ENCODE measurements at regions of chr6 and their contacts with region 1.

Region 1: DNA sequence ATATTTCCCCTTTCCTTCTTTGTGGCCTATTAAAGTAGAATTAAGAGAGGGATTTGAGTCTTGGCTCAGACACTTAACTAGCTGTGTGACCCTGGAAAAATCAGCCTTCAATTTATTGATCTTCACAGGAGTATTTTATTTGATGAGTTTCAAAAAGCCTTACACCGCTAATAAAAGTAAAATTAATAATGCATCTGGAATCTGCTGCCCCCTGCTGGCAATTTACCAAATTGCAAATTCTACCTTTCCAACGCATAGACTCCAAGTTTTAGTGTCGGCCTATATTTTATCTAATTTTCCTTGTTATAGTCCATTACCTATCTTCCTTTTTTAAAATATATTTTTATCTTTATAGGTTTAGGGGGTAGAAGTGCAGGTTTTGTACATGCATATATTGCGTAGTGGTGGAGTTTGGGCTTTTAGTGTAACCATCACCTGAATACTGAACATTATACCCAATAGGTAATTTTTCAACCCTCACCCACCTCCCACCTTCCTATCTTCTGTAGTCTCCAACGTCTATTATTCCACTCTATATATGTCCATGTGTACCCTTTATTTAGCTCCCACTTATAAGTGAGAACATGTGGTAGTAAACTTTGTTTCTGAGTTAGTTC is 46.3 kb downstream of the GOPC start:
- DNase-seq: no peak

Region 2: DNA sequence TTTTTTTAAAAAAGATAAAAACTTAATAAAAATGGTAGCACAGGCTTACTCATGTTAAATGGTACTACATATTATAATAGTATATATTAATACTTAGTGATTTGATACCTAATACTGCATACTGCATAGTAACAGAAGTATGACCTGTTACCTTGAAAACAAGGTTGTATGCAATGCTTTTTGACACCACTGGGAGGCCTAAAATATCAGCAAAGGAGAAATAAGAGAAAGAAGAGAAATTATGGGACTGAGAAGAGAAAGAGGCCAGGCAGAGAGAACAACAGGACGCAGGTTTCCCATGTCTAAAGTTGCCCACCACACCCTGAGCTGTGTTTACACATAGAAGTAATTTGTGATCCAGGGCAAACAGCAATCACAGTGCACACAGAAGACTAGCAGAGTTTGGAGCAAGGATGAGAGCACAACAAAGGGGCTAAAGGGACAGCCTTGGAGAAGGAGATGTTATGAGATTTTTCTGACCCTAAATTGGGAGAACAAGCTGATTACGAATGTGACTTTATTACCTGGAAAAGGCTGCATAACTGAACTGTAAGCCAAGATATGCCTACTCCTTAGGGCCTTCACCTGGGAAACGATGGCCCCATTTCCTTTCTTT is 203.4 kb before region 1 on chr6:
- intact Hi-C with region 1: loop called in 1 of 2 experiments (anchors 10 kb)
- DNase-seq: no peak

Region 3: GRCh38 chr6:117449549-117450439 is 106.2 kb before region 1 on chr6:
- intact Hi-C with region 1: loop called (anchors 5 kb)
- DNase-seq: no peak

Region 4: DNA sequence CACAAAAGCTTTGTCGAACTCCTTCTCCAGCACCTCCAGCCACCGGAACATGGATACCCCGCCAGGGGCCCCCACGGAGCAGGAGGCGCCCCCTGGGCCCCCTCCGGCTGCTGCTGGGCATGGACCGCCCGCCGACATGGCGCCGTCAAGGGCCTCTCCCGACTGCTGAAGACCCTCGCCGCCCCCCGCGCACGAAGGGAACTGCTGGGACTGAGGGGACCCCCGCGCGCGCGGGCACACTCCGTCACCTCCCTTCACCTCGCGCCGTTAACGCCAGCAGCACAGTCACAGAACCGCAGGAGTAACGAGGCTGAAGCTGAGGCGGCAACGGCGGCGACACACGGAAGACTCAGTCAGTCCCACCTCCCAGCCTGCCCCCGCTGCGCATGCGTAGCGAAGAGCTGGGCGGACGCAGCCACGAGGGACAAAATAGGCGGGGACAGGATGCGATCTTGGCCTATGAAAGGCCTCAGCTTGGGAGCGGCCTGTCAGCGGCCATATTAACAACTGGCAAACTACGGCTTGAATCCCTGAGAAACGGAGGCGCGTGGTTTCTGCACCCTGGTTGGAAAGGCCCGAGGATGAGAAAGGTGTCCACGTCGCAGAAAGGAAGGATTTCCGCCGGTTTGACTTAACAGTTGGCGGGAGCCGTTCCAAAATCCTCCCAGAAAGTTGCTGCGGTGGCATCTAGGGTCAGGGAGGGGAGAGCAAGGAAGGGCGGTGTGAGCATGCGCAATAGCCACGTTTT is 46.3 kb after region 1 on chr6 and contains the start of gene GOPC:
- intact Hi-C with region 1: no loop called
- DNase-seq: peak; percentile 99
- total RNA-seq, gene GOPC: 19.8 to 20.5 TPM

Region 5: GRCh38 chr6:117615894-117616390 is 60.0 kb after region 1 on chr6:
- intact Hi-C with region 1: no loop called
- DNase-seq: no peak

Region 6: DNA sequence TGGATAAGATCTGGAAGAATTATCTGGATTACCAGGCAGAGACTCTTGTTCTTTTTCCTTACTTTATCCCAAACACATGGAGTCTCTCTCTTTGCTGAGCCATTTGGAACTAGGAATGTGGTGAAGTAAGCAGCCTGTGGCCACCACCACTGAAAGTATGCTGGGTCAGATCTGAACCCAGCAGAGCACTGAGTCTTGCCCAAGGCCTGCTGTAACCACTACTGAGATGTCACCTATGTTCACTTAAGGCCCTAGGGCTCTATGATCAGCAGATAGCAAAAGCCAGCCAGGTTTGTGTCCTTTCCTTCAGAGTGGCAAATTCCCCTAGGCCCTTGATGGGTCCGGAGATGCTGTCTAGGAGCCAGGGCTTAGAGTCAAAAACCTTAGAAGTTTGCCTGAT is 888.8 kb after region 1 on chr6:
- intact Hi-C with region 1: no loop called
- DNase-seq: no peak